HEK293 (cell line): ENCODE measurements at regions of chr1 and their contacts with region 1.

Region 1: DNA sequence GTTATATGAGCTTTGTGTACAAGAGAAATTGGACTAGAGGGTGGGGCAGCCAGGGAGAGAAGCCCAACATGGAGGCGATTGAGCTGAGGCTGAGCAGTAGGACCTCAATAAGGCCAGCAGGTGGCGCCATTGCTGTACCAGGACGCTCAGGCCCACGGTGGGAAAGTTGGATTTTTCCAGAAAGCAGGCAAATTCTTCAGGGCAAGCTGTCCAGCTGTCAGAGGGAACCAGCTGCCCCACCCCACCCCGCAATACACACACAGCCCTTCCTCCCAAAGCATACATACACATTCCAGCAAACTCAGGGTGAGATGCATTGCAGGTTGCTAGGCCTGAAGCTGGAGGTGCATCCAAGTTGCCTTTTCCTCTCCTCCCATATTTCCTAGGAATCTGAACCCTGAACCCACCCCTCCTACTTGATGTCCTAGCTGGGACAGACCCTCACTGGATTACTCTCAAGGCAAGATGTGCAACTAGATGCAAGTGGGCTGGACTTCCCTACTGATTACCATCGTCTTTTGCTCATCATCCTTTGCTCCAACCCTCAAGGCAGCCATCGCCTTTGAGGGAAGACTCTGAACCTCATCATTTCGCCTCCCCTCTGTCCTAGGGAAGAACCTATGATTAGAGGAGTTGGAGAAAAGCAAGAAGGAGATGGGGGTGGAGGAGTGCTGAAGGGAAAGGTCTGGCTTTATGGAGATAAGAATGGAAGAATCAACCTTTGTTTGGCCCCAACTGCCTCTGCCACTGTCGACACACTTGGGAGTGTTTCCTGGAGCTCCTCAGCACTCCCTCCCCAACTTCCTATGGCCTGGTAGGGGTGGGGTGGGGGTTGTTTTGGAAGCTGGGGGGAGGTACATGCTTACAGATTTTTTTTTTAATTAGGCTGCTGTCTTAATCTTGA is 25.5 kb downstream of the CD34 start:
- H3K4me3 ChIP-seq: no peak overlapping the region
- H3K27ac ChIP-seq: no peak overlapping the region
- H3K4me1 ChIP-seq: no peaks in the 10 kb centered on the region
- CTCF ChIP-seq: peak; percentile 80

Region 2: DNA sequence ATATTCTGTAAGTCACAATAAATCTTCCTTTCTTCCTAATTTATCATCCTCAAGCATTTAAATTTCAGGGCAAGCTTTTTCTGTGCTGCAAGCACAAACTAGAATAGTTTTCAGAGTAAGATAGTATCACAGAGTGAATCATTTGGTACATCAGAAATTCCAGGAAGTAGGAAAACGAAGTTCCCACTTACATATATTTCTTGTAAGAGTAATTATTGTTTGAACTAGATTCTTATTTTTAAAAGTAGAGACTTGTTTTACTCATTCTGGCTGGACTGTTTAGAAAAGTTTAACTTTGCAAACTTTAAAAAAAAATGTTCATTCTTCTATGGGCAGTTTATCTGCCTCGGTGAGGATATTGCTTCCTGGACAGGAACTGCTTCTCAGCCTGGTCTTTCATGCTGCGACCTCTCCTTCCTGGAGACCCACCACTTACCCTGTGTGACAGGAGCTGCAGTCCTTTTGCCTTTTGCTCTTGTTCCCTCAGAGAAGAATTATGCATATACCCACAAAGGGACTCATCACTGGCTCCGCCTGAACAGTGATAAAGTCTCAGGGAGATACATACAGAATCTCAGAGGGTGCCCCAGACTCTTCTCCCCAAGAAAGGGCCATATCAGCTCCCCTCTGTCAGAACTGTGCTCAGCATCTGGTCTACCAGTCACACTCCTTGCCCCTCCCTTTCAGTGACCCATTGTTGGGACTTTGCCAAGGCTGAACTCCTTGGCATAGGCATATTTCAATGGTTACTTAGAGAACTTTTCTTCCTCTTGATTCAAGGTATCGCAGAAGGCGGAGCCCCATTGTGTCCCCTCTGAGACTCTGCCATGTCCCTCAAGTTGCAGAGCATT is 666.6 kb before region 1 on chr1:
- CTCF ChIA-PET with region 1: no interaction called
- POLR2A ChIA-PET with region 1: no interaction called
- H3K4me3 ChIP-seq: no peak overlapping the region
- H3K27ac ChIP-seq: no peak overlapping the region
- H3K4me1 ChIP-seq: peaks cover 5% of the 10 kb centered on the region; the same call in 1 of the 2 replicates
- CTCF ChIP-seq: no peak

Region 3: GRCh38 chr1:207811920-207812720 is 73.3 kb before region 1 on chr1:
- CTCF ChIA-PET with region 1: no interaction called
- POLR2A ChIA-PET with region 1: no interaction called
- H3K4me3 ChIP-seq: no peak overlapping the region
- H3K27ac ChIP-seq: no peak overlapping the region
- H3K4me1 ChIP-seq: no peaks in the 10 kb centered on the region
- CTCF ChIP-seq: 0 out of 2 replicates have a peak, but pooled peaks have one; percentile 14

Region 4: GRCh38 chr1:207828485-207829158 is 56.8 kb before region 1 on chr1:
- CTCF ChIA-PET with region 1: interaction called, 28 read pairs
- POLR2A ChIA-PET with region 1: no interaction called
- H3K4me3 ChIP-seq: no peak overlapping the region
- H3K27ac ChIP-seq: no peak overlapping the region
- H3K4me1 ChIP-seq: no peaks in the 10 kb centered on the region
- CTCF ChIP-seq: peak; percentile 60

Region 5: GRCh38 chr1:207897188-207897587 is 11.8 kb after region 1 on chr1:
- CTCF ChIA-PET with region 1: interaction called, 69 read pairs
- POLR2A ChIA-PET with region 1: no interaction called
- H3K4me3 ChIP-seq: no peak overlapping the region
- H3K27ac ChIP-seq: no peak overlapping the region
- H3K4me1 ChIP-seq: no peaks in the 10 kb centered on the region
- CTCF ChIP-seq: no peak

Region 6: GRCh38 chr1:207941665-207942064 is 56.3 kb after region 1 on chr1:
- CTCF ChIA-PET with region 1: interaction called, 12 read pairs
- POLR2A ChIA-PET with region 1: no interaction called
- H3K4me3 ChIP-seq: no peak overlapping the region
- H3K27ac ChIP-seq: no peak overlapping the region
- H3K4me1 ChIP-seq: no peaks in the 10 kb centered on the region
- CTCF ChIP-seq: no peak

Region 7: GRCh38 chr1:207952617-207953542 is 67.5 kb after region 1 on chr1:
- CTCF ChIA-PET with region 1: interaction called, 17 read pairs
- POLR2A ChIA-PET with region 1: no interaction called
- H3K4me3 ChIP-seq: no peak overlapping the region
- H3K27ac ChIP-seq: no peak overlapping the region
- H3K4me1 ChIP-seq: peaks cover 3% of the 10 kb centered on the region; the same call in 1 of the 2 replicates
- CTCF ChIP-seq: no peak

Region 8: GRCh38 chr1:207981976-207982375 is 96.6 kb after region 1 on chr1:
- CTCF ChIA-PET with region 1: interaction called, 17 read pairs
- POLR2A ChIA-PET with region 1: no interaction called
- H3K4me3 ChIP-seq: no peak overlapping the region
- H3K27ac ChIP-seq: no peak overlapping the region
- H3K4me1 ChIP-seq: no peaks in the 10 kb centered on the region
- CTCF ChIP-seq: peak; percentile 46; the same call in 1 of the 2 replicates

Region 9: DNA sequence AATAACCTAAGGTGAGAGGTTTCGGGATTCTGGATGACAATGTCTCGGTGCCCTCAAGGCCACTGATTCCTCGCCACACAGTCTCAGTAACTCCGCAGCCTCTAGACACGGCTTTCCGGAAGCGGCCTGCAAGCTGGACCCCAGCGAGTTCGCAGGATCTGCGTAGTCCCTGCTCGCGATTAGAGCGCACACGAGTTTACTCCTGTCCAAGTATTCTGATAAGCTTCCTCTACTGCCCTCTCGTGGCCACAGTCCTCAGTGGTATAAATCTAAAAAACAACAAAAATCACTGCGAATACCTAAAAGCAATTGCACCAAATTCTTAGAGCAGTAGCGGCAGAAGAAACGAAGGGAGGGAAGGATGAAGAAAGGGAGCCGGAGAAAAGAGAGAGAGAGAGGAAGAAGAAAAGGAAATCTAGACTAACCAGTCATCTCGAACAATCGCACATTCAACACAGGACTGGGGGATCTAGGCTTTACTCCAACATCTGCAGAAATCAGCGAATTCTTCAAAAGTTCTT is 359.9 kb after region 1 on chr1:
- CTCF ChIA-PET with region 1: interaction called, 13 read pairs
- POLR2A ChIA-PET with region 1: no interaction called
- H3K4me3 ChIP-seq: no peak overlapping the region
- H3K27ac ChIP-seq: peak overlapping the region; percentile 56; the same call in 1 of the 2 replicates
- H3K4me1 ChIP-seq: no peaks in the 10 kb centered on the region; the same call in 1 of the 2 replicates
- CTCF ChIP-seq: peak; percentile 78